Activated CD8-positive, alpha-beta T cell treated with anti-CD3 and anti-CD28 coated beads, Interleukin-2, amount 10 ng/mL, durations not matched to agents 7 days and 5 days (primary cell): ENCODE measurements at regions of chr9 and their contacts with region 1.

Region 1: GRCh38 chr9:137618105-137619067 is at the start of gene EHMT1:
- DNase-seq: peak; percentile 90
- ATAC-seq: peak; percentile 85
- H3K4me3 Mint-ChIP-seq: peak within 1 kb of the TSS; percentile 86
- H3K27ac Mint-ChIP-seq: peak within 1 kb of the TSS; percentile 91
- H3K4me1 Mint-ChIP-seq: peaks cover 41% of the 10 kb centered on the region
- H3K27me3 Mint-ChIP-seq: no peaks in the 10 kb centered on the region
- total RNA-seq, gene EHMT1: 112 to 115 TPM

Region 2: GRCh38 chr9:137632230-137633161 is 14.1 kb after region 1 on chr9:
- CTCF ChIA-PET with region 1: interaction called, 14 read pairs
- POLR2A ChIA-PET with region 1: interaction called, 10 read pairs
- DNase-seq: no peak
- ATAC-seq: no peak
- H3K4me3 Mint-ChIP-seq: no peak overlapping the region
- H3K27ac Mint-ChIP-seq: no peak overlapping the region
- H3K4me1 Mint-ChIP-seq: peaks cover 49% of the 10 kb centered on the region
- H3K27me3 Mint-ChIP-seq: no peaks in the 10 kb centered on the region